OCI-LY7 (cell line): ENCODE measurements at regions of chr7 and their contacts with region 1.

Region 1: GRCh38 chr7:70016044-70016770 is 417.9 kb downstream of the AUTS2 start:
- DNase-seq: no peak
- H3K4me3 ChIP-seq: no peak overlapping the region
- H3K27ac ChIP-seq: no peak overlapping the region
- H3K4me1 ChIP-seq: peaks cover 27% of the 10 kb centered on the region
- CTCF ChIP-seq: no peak

Region 2: GRCh38 chr7:70027867-70028266 is 11.7 kb after region 1 on chr7:
- CTCF ChIA-PET with region 1: no interaction called
- POLR2A ChIA-PET with region 1: interaction called, 22 read pairs
- intact Hi-C with region 1: no loop called
- DNase-seq: peak; percentile 82
- H3K4me3 ChIP-seq: peak overlapping the region; percentile 27
- H3K27ac ChIP-seq: peak overlapping the region; percentile 64
- H3K4me1 ChIP-seq: peaks cover 55% of the 10 kb centered on the region
- CTCF ChIP-seq: no peak

Region 3: GRCh38 chr7:70113536-70113935 is 97.3 kb after region 1 on chr7:
- CTCF ChIA-PET with region 1: no interaction called
- POLR2A ChIA-PET with region 1: interaction called, 11 read pairs
- intact Hi-C with region 1: no loop called
- DNase-seq: no peak
- H3K4me3 ChIP-seq: no peak overlapping the region
- H3K27ac ChIP-seq: no peak overlapping the region
- H3K4me1 ChIP-seq: no peaks in the 10 kb centered on the region
- CTCF ChIP-seq: no peak